ENCODE measurements at regions of chr1 and their contacts with region 1.

Region 1: DNA sequence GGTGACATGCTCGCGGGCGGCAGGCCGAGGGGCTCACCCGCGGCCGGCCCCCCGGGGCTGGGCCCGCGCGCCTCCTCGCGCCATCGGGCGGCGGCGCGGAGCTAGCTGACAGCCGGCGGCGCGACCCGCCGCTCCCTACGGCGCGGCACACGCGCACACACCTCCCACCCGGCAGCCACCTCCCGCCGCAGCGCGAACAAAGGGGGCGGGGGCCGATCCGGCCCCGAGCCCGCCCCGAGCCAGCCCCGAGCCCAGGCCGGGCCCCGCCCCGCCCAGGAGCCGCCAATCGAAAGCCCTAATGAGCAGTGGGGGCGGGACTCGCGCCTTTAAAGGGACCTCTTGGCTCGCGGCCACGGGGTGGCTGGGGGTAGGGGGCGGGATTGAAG is at the start of gene KIF21B:
- DNase-seq: peak; percentile 89 to 92 (median 92)
- H3K4me3 ChIP-seq: peak within 1 kb of the TSS; percentile 67 to 86
- H3K4me3 Mint-ChIP-seq: peak within 1 kb of the TSS; percentile 92 to 98 (median 96)
- H3K27ac ChIP-seq: peak within 1 kb of the TSS; percentile 69
- H3K27ac Mint-ChIP-seq: peak within 1 kb of the TSS; percentile 95 to 100 (median 97)
- H3K4me1 ChIP-seq: peaks cover 70% of the 10 kb centered on the region
- H3K4me1 Mint-ChIP-seq: peaks cover 54 to 78% (median 64%) of the 10 kb centered on the region in 4 donors
- H3K27me3 ChIP-seq: no peaks in the 10 kb centered on the region
- H3K27me3 Mint-ChIP-seq: no peaks in the 10 kb centered on the region
- total RNA-seq, gene KIF21B: 90.3 to 94.7 TPM

Region 2: DNA sequence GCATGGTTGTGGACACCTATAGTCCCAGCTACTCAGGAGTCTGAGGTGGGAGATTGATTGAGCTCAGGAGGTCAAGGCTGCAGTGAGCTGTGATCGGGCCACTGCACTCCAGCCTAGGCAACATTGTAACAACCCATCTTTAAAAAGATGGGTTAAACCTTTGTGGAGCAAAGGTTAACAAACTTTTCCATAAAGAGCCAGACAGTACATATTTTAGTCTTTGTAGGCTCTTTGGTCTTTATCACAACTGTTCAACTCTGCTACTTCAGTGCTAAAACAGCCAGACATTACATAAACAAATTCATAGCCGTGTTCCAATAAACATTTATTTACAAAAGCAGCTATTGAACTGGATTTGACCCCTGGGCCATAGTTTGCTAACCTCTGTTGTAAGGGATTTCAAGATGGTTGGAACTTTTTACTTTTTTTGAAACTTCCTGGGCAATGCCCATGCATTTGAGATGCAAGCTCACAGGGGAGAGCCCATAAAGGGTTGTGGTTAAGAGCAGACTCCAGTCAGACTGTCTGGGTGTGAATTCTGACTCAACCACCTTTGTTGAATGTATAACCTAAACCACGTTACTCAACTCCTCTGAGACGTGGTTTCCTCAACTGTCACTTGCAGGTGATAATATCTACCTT is 118.0 kb before region 1 on chr1:
- CTCF ChIA-PET with region 1: no interaction called
- POLR2A ChIA-PET with region 1: no interaction called
- intact Hi-C with region 1: loop called (anchors 1 kb)
- DNase-seq: peak; percentile 56 to 87 (median 67)
- H3K4me3 ChIP-seq: no peak overlapping the region
- H3K4me3 Mint-ChIP-seq: peak overlapping the region in 2 of 8 donors; percentile 20 to 47
- H3K27ac ChIP-seq: no peak overlapping the region
- H3K27ac Mint-ChIP-seq: peak overlapping the region in 5 of 7 donors; percentile 8 to 79 (median 53)
- H3K4me1 ChIP-seq: peaks cover 27% of the 10 kb centered on the region
- H3K4me1 Mint-ChIP-seq: peaks cover 8 to 24% (median 14%) of the 10 kb centered on the region in 4 donors
- H3K27me3 ChIP-seq: no peaks in the 10 kb centered on the region
- H3K27me3 Mint-ChIP-seq: peaks cover 0 to 3% of the 10 kb centered on the region in 2 donors

Region 3: GRCh38 chr1:201036188-201036842 is 12.8 kb after region 1 on chr1:
- CTCF ChIA-PET with region 1: interaction called, 90 read pairs
- POLR2A ChIA-PET with region 1: interaction called, 5 read pairs
- intact Hi-C with region 1: no loop called
- DNase-seq: no peak
- H3K4me3 ChIP-seq: no peak overlapping the region
- H3K4me3 Mint-ChIP-seq: no peak overlapping the region
- H3K27ac ChIP-seq: no peak overlapping the region
- H3K27ac Mint-ChIP-seq: no peak overlapping the region
- H3K4me1 ChIP-seq: no peaks in the 10 kb centered on the region
- H3K4me1 Mint-ChIP-seq: no peaks in the 10 kb centered on the region
- H3K27me3 ChIP-seq: no peaks in the 10 kb centered on the region
- H3K27me3 Mint-ChIP-seq: no peaks in the 10 kb centered on the region

Region 4: DNA sequence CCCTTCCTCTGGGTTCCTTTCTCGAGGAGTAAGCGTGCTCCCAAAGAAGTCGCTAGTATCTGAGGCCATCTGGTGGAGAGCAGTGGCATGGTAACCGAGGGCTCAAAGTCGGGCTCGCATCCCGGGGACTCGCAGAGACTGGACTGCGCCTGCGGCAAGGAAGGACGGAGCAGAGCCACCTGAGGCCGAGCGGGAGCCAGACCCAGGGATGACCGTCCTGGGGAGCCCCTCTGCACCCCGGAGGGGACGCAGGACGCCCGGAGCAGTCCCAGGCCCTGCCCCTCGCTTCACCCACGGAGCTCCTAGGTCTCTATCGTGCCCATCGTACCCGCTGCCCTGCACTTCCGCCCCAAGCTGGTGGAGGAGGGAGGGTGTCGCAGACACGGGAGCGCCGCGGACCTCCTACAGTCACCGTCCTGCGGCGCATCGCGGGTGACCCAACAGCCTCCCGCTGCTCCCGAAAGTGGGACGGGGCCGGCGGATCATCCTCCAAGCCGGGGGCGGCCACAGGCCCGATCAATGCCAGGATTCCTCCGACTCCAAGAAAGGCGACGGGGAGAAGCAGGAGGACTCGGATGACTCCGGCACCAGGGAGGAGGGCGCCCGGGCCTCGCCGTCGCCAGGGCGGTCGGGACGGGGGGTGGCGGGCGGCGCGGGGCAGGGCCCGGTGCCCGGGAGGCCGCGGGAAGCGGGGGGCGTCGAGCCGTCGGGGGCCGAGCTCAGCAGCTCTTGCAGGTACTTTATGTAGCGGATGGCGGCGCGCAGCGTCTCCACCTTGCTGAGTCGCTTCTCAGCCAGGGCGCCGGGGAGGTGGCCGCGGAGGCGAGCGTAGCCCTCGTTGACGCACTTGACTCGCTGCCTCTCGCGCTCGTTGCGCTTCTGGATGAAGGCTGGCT is 91.0 kb after region 1 on chr1:
- CTCF ChIA-PET with region 1: interaction called, 9 read pairs
- POLR2A ChIA-PET with region 1: interaction called, 10 read pairs
- intact Hi-C with region 1: loop called (anchors 2 kb)
- DNase-seq: peak; percentile 69 to 79 (median 74)
- H3K4me3 ChIP-seq: peak overlapping the region; percentile 57 to 65
- H3K4me3 Mint-ChIP-seq: peak overlapping the region; percentile 89 to 96 (median 92)
- H3K27ac ChIP-seq: peak overlapping the region; percentile 38
- H3K27ac Mint-ChIP-seq: peak overlapping the region; percentile 75 to 93 (median 89)
- H3K4me1 ChIP-seq: peaks cover 11% of the 10 kb centered on the region
- H3K4me1 Mint-ChIP-seq: peaks cover 3 to 22% (median 10%) of the 10 kb centered on the region in 4 donors
- H3K27me3 ChIP-seq: no peaks in the 10 kb centered on the region
- H3K27me3 Mint-ChIP-seq: no peaks in the 10 kb centered on the region

Measured in CD4-positive, alpha-beta memory T cell (primary cell).